ENCODE measurements at regions of chr7 and their contacts with region 1.

Region 1: GRCh38 chr7:118195837-118196474 is 12.0 kb downstream of the LSM8 start:
- DNase-seq: peak; percentile 73
- H3K4me3 Mint-ChIP-seq: no peak overlapping the region
- H3K27ac Mint-ChIP-seq: no peak overlapping the region
- H3K4me1 Mint-ChIP-seq: no peaks in the 10 kb centered on the region
- H3K27me3 Mint-ChIP-seq: no peaks in the 10 kb centered on the region
- CTCF ChIP-seq: peak; percentile 55

Region 2: GRCh38 chr7:118183786-118184564 is 12.0 kb before region 1 on chr7 and contains the start of gene LSM8:
- CTCF ChIA-PET with region 1: interaction called, 13 read pairs
- POLR2A ChIA-PET with region 1: interaction called, 13 read pairs
- intact Hi-C with region 1: no loop called
- DNase-seq: peak; percentile 97
- H3K4me3 Mint-ChIP-seq: peak within 1 kb of the TSS; percentile 88
- H3K27ac Mint-ChIP-seq: peak within 1 kb of the TSS; percentile 98
- H3K4me1 Mint-ChIP-seq: peaks cover 11% of the 10 kb centered on the region
- H3K27me3 Mint-ChIP-seq: no peaks in the 10 kb centered on the region
- CTCF ChIP-seq: no peak
- total RNA-seq, gene LSM8: 48.2 and 56.5 TPM in 2 replicates

Measured in MCF 10A (cell line).